Naive thymus-derived CD4-positive, alpha-beta T cell (primary cell): ENCODE measurements at regions of chr18 and their contacts with region 1.

Region 1: DNA sequence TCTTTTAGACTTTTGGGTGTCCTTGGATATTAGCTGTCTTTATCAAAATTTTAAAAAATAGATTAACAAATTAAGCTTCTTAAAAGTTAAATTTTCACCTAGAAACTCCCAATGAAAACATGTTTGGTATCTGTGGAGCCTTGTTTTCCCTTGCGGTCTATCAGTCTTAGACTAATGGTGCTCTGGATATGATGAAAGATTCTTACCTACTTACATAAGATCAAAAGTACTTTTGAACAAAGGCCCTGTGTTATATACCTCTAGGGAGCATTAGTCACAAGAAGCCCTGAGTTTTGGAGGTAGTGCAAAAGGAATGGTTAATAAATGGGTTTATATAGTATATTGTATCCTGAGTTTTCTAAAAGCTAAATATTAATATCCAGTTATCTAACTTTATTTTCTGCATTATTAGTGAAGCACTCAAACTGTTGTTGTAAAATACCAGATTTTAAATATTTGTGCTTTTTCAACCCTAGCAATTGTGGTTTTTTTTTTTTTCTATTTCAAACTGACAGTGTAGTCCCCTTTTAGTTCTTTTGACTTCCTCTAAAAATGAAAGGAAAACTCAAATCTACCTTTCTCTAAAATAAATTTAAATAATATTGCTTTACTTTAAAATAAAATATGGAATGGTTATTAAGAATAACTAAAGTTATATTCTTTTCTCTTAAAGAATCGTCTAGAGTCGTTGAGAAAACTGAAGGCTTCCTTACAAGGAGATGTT is 18.1 kb downstream of the NDC80 start:
- DNase-seq: peak in 5 of 9 donors; percentile 24 to 58 (median 49)
- ATAC-seq: peak; percentile 70
- H3K4me3 ChIP-seq: peak overlapping the region; percentile 44
- H3K4me3 Mint-ChIP-seq: peak overlapping the region in 9 of 10 donors; percentile 65 to 93 (median 80)
- H3K27ac ChIP-seq: peak overlapping the region; percentile 78
- H3K27ac Mint-ChIP-seq: peak overlapping the region; percentile 85 to 96 (median 92)
- H3K4me1 ChIP-seq: peaks cover 31 to 48% of the 10 kb centered on the region in 2 donors
- H3K4me1 Mint-ChIP-seq: peaks cover 12 to 66% (median 60%) of the 10 kb centered on the region in 7 donors
- H3K27me3 ChIP-seq: no peaks in the 10 kb centered on the region
- H3K27me3 Mint-ChIP-seq: no peaks in the 10 kb centered on the region

Region 2: DNA sequence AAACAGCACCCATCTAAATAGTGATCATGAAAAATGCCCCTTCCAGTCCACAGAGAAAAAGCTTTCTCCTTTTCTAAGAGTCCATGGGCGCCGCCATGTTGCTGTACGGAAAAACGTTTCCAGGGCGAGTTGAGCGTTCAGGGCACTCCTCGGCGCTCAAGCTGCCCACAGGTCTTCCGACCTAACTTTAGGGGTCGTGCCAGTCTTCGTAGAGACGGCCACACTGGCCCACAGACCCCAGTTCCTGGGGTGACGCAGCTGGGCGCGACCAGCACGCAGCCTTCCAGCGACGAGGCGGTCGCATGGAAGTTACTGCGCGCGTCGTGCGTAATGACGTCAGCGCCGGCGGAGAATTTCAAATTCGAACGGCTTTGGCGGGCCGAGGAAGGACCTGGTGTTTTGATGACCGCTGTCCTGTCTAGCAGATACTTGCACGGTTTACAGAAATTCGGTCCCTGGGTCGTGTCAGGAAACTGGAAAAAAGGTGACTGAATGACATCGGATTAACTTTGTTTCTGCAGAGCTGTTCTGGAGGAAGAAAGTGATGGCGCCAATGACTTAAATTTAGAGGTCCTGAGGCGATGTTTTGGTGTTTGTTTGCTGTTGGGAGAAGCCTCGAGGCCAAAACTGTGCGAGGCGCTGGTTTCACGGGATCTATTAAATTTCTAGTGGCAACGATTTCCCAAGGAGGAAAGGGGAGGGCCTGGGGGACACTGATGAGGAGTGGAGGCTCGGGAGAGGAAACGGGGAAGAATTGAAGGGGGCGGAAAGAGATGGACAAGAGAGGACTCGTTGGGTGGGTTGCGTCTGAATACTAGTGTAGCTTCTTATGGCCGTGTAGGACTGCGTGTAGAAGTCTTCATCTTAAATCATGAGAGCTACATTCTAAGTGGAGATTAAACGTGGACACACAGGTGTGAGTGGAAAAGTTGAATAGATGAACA is 18.0 kb before region 1 on chr18 and contains the starts of genes METTL4 and NDC80:
- CTCF ChIA-PET with region 1: interaction called, 4 read pairs
- POLR2A ChIA-PET with region 1: interaction called, 142 read pairs
- intact Hi-C with region 1: loop called (anchors 1 kb)
- DNase-seq: peak; percentile 70 to 90 (median 82)
- ATAC-seq: peak; percentile 87
- H3K4me3 ChIP-seq: peak within 1 kb of the TSS; percentile 88
- H3K4me3 Mint-ChIP-seq: peak within 1 kb of the TSS; percentile 96 to 100 (median 99)
- H3K27ac ChIP-seq: peak within 1 kb of the TSS; percentile 97
- H3K27ac Mint-ChIP-seq: peak within 1 kb of the TSS; percentile 98 to 100 (median 100)
- H3K4me1 ChIP-seq: peaks cover 10 to 13% of the 10 kb centered on the region in 2 donors
- H3K4me1 Mint-ChIP-seq: peaks cover 38 to 63% (median 59%) of the 10 kb centered on the region in 7 donors
- H3K27me3 ChIP-seq: no peaks in the 10 kb centered on the region
- H3K27me3 Mint-ChIP-seq: no peaks in the 10 kb centered on the region
- total RNA-seq, gene METTL4: 13.8 to 32.5 (median 22.8) TPM
- total RNA-seq, gene NDC80: 2.4 to 53.6 (median 2.7) TPM

Region 3: DNA sequence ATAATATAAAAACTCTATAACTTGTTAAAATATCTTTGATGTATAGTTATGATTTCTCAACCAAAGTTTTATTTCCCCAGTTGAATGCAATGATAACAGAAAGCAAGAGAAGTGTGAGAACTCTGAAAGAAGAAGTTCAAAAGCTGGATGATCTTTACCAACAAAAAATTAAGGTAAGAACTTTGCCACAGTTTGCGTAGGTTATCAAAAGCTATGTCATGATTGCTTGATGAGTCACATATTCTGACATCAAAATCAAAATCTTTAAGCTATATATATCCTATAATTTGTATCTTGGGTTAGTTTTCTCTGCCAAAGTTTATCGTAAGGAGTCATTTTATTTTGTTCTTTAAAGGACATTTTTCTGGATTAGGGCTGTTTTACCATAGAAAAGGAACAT is 16.8 kb after region 1 on chr18:
- CTCF ChIA-PET with region 1: interaction called, 9 read pairs
- POLR2A ChIA-PET with region 1: interaction called, 39 read pairs
- intact Hi-C with region 1: loop called (anchors 1 to 2 kb)
- DNase-seq: peak in 6 of 9 donors; percentile 42 to 65 (median 53)
- ATAC-seq: peak; percentile 73
- H3K4me3 ChIP-seq: no peak overlapping the region
- H3K4me3 Mint-ChIP-seq: peak overlapping the region; percentile 16 to 84 (median 70)
- H3K27ac ChIP-seq: peak overlapping the region; percentile 73
- H3K27ac Mint-ChIP-seq: peak overlapping the region; percentile 79 to 94 (median 87)
- H3K4me1 ChIP-seq: peaks cover 28 to 35% of the 10 kb centered on the region in 2 donors
- H3K4me1 Mint-ChIP-seq: peaks cover 22 to 79% (median 64%) of the 10 kb centered on the region in 7 donors
- H3K27me3 ChIP-seq: no peaks in the 10 kb centered on the region
- H3K27me3 Mint-ChIP-seq: no peaks in the 10 kb centered on the region

Region 4: GRCh38 chr18:2641638-2642037 is 52.1 kb after region 1 on chr18:
- CTCF ChIA-PET with region 1: interaction called, 11 read pairs
- POLR2A ChIA-PET with region 1: interaction called, 74 read pairs
- intact Hi-C with region 1: loop called (anchors 1 kb)
- DNase-seq: peak in 7 of 9 donors; percentile 38 to 58 (median 52)
- ATAC-seq: peak; percentile 18
- H3K4me3 ChIP-seq: peak overlapping the region; percentile 36
- H3K4me3 Mint-ChIP-seq: peak overlapping the region in 9 of 10 donors; percentile 73 to 87 (median 84)
- H3K27ac ChIP-seq: peak overlapping the region; percentile 83
- H3K27ac Mint-ChIP-seq: peak overlapping the region in 3 of 9 donors; percentile 91 to 99 (median 95)
- H3K4me1 ChIP-seq: peaks cover 70 to 73% of the 10 kb centered on the region in 2 donors
- H3K4me1 Mint-ChIP-seq: peaks cover 0 to 54% (median 47%) of the 10 kb centered on the region in 7 donors
- H3K27me3 ChIP-seq: no peaks in the 10 kb centered on the region
- H3K27me3 Mint-ChIP-seq: no peaks in the 10 kb centered on the region

Region 5: DNA sequence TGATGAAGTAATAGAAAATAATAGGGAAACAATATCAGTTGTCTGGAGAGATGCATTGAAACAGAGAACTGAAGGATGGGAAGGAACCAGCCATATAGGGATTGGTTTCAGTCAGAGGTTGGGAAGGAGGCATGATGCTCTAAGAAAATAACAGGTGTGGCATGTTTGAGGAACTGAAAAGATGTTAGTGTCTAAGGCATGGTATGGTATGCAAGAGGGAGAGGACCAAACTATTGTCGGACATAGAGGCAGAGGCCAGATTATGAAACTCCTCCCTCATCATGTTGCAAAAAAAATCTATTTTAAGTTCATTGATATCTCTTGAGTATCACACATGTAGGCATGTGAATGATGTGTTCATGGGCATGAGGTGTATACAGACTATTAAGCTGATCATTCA is 208.4 kb after region 1 on chr18:
- CTCF ChIA-PET with region 1: no interaction called
- POLR2A ChIA-PET with region 1: no interaction called
- intact Hi-C with region 1: loop called in 1 of 2 experiments (anchors 5 kb)
- DNase-seq: no peak
- ATAC-seq: no peak
- H3K4me3 ChIP-seq: no peak overlapping the region
- H3K4me3 Mint-ChIP-seq: no peak overlapping the region
- H3K27ac ChIP-seq: no peak overlapping the region
- H3K27ac Mint-ChIP-seq: peak overlapping the region in 3 of 9 donors; percentile 6 to 48 (median 41)
- H3K4me1 ChIP-seq: no peaks in the 10 kb centered on the region
- H3K4me1 Mint-ChIP-seq: peaks cover 3 to 21% (median 9%) of the 10 kb centered on the region in 7 donors
- H3K27me3 ChIP-seq: no peaks in the 10 kb centered on the region
- H3K27me3 Mint-ChIP-seq: no peaks in the 10 kb centered on the region

Region 6: DNA sequence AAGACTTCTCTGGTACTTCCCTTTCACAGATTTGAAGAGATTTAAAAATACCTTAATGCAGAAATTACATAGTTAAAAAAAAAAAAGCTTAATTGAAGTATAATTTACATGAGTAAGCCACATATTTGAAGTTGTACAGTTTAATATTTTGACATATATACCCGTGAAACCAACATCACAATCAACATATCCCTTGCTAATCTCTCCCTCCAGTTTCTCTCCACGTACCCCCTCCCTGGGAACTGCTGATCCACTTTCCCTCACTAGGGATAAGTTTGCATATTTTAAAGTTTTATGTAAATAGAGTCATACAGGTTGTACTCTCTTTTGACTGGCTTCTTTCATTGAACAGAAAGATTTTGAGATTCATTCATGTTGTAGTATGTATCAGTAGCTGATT is 279.7 kb after region 1 on chr18:
- CTCF ChIA-PET with region 1: no interaction called
- POLR2A ChIA-PET with region 1: no interaction called
- intact Hi-C with region 1: no loop called
- DNase-seq: no peak
- ATAC-seq: no peak
- H3K4me3 ChIP-seq: no peak overlapping the region
- H3K4me3 Mint-ChIP-seq: no peak overlapping the region
- H3K27ac ChIP-seq: no peak overlapping the region
- H3K27ac Mint-ChIP-seq: no peak overlapping the region
- H3K4me1 ChIP-seq: no peaks in the 10 kb centered on the region
- H3K4me1 Mint-ChIP-seq: peaks cover 0 to 17% (median 3%) of the 10 kb centered on the region in 7 donors
- H3K27me3 ChIP-seq: no peaks in the 10 kb centered on the region
- H3K27me3 Mint-ChIP-seq: peaks cover 0 to 12% (median 0%) of the 10 kb centered on the region in 5 donors